SK-N-SH (cell line): ENCODE measurements at regions of chr2 and their contacts with region 1.

Region 1: DNA sequence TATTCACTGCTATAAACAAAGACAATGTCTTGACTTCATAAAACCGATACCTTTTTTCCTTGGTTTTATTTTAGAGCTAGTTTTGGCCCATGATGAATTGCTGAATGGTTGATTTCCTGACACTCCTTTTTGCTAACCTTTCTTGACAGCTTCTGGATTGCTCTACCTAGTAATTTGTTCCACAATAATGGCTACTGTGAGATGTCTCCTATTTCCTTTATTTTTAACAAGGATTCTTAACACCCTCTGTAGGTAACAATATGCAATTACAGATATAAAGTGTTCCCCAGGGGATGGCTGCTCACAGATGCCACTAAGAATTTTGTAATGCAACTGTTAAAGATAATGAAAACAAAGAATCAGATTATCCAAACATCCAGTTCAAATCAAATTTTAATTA is 100.8 kb upstream of the ATP5MC3 start:
- DNase-seq: peak; percentile 64
- H3K4me3 ChIP-seq: no peak overlapping the region
- H3K27ac ChIP-seq: no peak overlapping the region
- H3K4me1 ChIP-seq: no peaks in the 10 kb centered on the region; a peak in 2 of 4 replicates
- H3K27me3 ChIP-seq: no peaks in the 10 kb centered on the region
- CTCF ChIP-seq: peak; percentile 57
- EP300 ChIP-seq: no peak
- RAD21 ChIP-seq: peak; percentile 73

Region 2: DNA sequence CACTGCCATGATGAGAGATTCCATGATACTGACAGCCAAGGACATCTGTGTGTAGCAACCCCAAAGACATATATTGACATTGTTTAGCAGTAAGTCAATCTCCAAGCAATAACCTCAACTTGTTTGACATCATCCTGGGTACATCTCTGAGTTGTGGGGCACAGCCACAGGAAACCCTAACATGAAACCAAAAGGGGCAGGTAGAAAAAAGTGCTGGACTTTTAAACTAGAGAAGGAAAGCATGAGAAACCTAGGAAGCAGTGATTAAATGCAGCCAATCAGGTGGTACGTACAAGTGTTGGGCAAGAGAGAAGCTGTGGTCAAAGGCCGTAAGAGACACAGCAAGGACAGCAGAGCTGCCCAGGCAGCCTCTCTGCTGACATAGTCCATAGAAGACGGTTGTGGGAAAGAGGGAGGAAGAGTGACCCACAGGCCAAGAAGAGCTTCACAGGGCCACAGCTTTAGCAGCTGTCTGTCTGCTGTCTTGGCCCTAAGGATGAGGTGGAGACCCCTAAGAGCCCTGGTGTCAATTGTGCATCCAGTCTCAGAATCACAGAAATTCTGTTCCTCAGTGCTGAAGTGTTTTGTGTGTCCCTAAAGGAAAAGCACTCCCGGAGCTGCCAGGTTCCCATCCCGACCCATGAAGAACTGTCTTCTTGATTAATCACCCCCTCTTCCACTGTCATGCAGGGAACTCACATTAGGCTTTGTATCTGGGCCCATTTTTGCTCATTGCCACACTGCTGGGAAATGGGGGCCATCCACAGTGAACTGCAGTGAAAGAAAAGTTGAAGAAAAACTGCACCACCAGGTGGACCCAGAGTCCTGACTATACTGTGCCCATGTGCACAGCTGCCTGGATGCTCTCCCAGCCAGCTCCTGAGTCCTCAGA is 251.7 kb before region 1 on chr2:
- CTCF ChIA-PET with region 1: interaction called, 19 read pairs
- POLR2A ChIA-PET with region 1: no interaction called
- DNase-seq: peak; percentile 33
- H3K4me3 ChIP-seq: no peak overlapping the region; a peak in 1 of 4 replicates
- H3K27ac ChIP-seq: no peak overlapping the region
- H3K4me1 ChIP-seq: no peaks in the 10 kb centered on the region
- H3K27me3 ChIP-seq: no peaks in the 10 kb centered on the region
- CTCF ChIP-seq: peak; percentile 50
- EP300 ChIP-seq: no peak
- RAD21 ChIP-seq: peak; percentile 75

Region 3: DNA sequence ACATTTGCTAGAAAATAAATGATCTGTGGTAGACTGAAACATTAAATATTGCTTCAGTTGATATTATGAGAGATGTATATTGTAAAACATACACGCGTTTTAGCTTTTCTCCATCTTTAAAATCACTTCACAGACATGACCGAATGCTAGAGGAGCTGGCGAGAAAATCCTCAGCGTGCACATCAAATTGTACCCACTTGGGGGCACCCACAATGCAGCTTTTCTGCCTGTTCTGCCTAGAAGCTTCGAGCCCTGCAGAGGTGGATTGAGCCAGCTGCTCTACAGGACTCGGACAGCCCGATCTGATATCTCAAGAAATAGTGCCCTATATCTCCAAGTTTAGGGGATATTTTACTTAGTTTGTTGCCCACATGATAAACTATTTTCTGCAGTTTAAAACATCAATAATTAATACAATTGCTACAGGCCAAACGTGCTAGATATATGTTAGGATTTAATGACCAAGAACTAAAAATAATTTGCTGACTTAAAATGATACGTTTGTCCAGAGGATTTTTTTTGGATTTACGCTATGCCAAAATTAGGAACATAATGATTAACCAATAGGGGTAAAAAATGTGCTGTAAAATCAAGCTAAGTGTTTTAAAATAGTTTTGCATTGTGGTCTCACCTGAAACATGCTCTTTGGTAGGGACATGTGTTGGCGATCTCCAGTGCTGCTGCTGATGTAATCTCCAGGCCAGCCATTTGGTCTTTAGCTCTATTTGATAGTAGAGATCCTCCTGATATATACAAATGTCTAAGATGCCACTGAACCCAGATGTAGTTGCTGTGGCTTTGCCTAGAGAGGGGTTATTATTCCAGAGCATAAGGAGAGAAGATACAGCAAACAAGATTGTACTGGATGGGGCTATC is 78.4 kb before region 1 on chr2:
- CTCF ChIA-PET with region 1: interaction called, 37 read pairs
- POLR2A ChIA-PET with region 1: no interaction called
- DNase-seq: peak; percentile 56
- H3K4me3 ChIP-seq: peak overlapping the region in 1 of 2 experiments; percentile 26; a peak in 1 of 4 replicates
- H3K27ac ChIP-seq: no peak overlapping the region
- H3K4me1 ChIP-seq: peaks cover 0 to 8% of the 10 kb centered on the region in 2 experiments; a peak in 2 of 4 replicates
- H3K27me3 ChIP-seq: no peaks in the 10 kb centered on the region
- CTCF ChIP-seq: peak; percentile 67
- EP300 ChIP-seq: peak in 1 of 2 experiments; percentile 18; a peak in 1 of 4 replicates
- RAD21 ChIP-seq: peak; percentile 73

Region 4: DNA sequence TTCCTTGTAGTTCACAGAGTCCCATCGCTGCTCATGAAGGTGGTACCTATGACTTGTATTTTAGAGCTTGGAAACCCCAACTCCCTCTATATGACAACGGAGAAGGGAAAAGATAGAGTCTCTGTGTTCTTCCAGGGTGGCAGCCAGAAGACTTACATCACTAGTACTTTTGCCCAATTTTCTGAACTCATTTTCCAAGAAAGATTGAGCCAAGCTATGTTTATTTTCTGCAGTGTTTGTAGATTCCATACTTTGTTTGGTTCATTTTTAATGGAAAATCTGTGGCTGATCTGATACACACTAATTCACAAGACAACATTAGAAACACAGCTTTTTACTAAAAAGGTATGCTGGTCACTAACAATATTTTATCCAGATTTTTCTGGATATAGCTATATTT is 40.6 kb before region 1 on chr2:
- CTCF ChIA-PET with region 1: interaction called, 10 read pairs
- POLR2A ChIA-PET with region 1: no interaction called
- DNase-seq: no peak
- H3K4me3 ChIP-seq: no peak overlapping the region
- H3K27ac ChIP-seq: no peak overlapping the region
- H3K4me1 ChIP-seq: no peaks in the 10 kb centered on the region
- H3K27me3 ChIP-seq: 0 out of 2 replicates have a peak, but pooled peaks cover 3% of the 10 kb centered on the region
- CTCF ChIP-seq: no peak
- EP300 ChIP-seq: no peak
- RAD21 ChIP-seq: no peak

Region 5: GRCh38 chr2:175256889-175257585 is 25.3 kb before region 1 on chr2:
- CTCF ChIA-PET with region 1: interaction called, 168 read pairs
- POLR2A ChIA-PET with region 1: no interaction called
- DNase-seq: no peak
- H3K4me3 ChIP-seq: no peak overlapping the region
- H3K27ac ChIP-seq: no peak overlapping the region
- H3K4me1 ChIP-seq: no peaks in the 10 kb centered on the region
- H3K27me3 ChIP-seq: no peaks in the 10 kb centered on the region; the same call in 1 of the 2 replicates
- CTCF ChIP-seq: no peak
- EP300 ChIP-seq: no peak
- RAD21 ChIP-seq: no peak